WTC11 (cell line): ENCODE measurements at regions of chr9 and their contacts with region 1.

Region 1: DNA sequence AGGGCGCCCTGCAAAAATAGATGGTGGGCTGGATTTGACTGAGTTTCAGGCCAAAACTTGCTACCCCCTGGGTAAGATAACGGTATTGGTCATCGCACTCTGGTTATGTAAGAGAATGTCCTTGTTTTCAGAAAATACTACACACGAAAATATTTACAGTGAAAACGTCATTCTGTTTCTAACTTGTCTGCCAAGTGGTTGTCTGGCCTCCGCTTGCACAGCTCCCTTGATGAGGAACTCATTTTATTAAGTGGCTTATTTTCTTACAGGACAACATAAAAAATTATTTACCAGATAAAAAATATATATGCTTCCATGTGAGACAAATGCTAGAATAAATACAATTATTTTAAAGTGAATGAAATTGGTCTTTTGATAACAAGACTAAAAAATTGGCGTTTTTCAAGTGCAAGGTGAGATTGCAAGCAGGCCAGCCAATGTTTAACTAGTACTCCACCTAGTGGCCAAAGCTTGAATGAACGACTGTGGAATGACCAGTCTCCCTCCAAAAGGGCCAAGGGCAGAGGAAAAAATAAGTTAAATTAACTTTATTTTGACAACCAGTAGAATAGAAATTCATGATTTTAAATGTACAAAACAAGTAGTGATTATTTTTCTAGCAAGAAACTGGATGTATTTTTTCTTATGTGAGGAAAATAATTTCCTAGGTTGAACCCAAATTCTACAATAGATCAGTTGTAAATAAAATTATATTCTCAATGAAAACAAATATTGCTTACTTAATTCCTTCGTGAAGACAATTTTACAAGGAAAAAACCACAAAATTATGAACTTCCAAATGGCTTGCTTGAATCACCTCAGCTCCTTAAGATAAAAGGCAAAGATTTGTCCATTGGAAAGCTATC is 93.2 kb downstream of the ZFAND5 start:
- DNase-seq: peak; percentile 43
- ATAC-seq: peak; percentile 57; the same call in 1 of the 2 replicates
- H3K4me3 Mint-ChIP-seq: no peak overlapping the region
- H3K27ac Mint-ChIP-seq: no peak overlapping the region
- H3K4me1 Mint-ChIP-seq: no peaks in the 10 kb centered on the region
- H3K27me3 Mint-ChIP-seq: no peaks in the 10 kb centered on the region
- CTCF ChIP-seq: peak; percentile 80

Region 2: GRCh38 chr9:72048850-72049249 is 223.0 kb before region 1 on chr9:
- CTCF ChIA-PET with region 1: no interaction called
- POLR2A ChIA-PET with region 1: no interaction called
- DNase-seq: no peak
- ATAC-seq: no peak
- H3K4me3 Mint-ChIP-seq: no peak overlapping the region
- H3K27ac Mint-ChIP-seq: no peak overlapping the region
- H3K4me1 Mint-ChIP-seq: no peaks in the 10 kb centered on the region
- H3K27me3 Mint-ChIP-seq: no peaks in the 10 kb centered on the region; the same call in 1 of the 2 replicates
- CTCF ChIP-seq: no peak

Region 3: GRCh38 chr9:72203205-72203803 is 68.5 kb before region 1 on chr9:
- CTCF ChIA-PET with region 1: interaction called, 13 read pairs
- POLR2A ChIA-PET with region 1: no interaction called
- DNase-seq: peak; percentile 26
- ATAC-seq: peak; percentile 99
- H3K4me3 Mint-ChIP-seq: no peak overlapping the region
- H3K27ac Mint-ChIP-seq: no peak overlapping the region
- H3K4me1 Mint-ChIP-seq: no peaks in the 10 kb centered on the region
- H3K27me3 Mint-ChIP-seq: no peaks in the 10 kb centered on the region; the same call in 1 of the 2 replicates
- CTCF ChIP-seq: 0 out of 2 replicates have a peak, but pooled peaks have one; percentile 22